ENCODE measurements at regions of chr5 and their contacts with region 1.

Region 1: GRCh38 chr5:59216841-59217240 is 634.0 kb downstream of the RAB3C start:
- DNase-seq: no peak
- ATAC-seq: no peak
- H3K4me3 Mint-ChIP-seq: no peak overlapping the region
- H3K27ac Mint-ChIP-seq: no peak overlapping the region
- H3K4me1 Mint-ChIP-seq: no peaks in the 10 kb centered on the region
- H3K27me3 Mint-ChIP-seq: peaks cover 30% of the 10 kb centered on the region

Region 2: DNA sequence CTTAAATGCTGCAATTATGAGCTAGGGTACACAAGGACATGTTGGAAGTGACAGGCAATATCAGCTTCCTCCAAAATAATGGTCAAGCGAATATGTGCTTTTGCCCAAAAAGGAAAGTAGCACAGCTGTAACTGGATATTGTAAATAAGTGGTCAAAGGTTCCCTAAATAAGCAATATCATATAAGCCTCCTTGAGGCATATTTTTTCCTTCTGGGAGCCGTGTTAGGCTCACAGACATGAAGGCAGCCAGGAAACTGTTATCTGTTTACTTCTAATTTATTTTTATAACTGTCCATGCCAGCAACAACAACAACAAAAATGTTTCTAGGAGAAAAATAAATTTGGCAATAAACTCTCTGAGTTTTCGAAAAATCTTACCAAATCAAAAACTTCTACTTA is 28.4 kb after region 1 on chr5:
- CTCF ChIA-PET with region 1: no interaction called
- POLR2A ChIA-PET with region 1: no interaction called
- DNase-seq: no peak
- ATAC-seq: no peak
- H3K4me3 Mint-ChIP-seq: no peak overlapping the region
- H3K27ac Mint-ChIP-seq: no peak overlapping the region
- H3K4me1 Mint-ChIP-seq: no peaks in the 10 kb centered on the region
- H3K27me3 Mint-ChIP-seq: peaks cover 6% of the 10 kb centered on the region

Region 3: GRCh38 chr5:59360130-59360555 is 143.3 kb after region 1 on chr5:
- CTCF ChIA-PET with region 1: no interaction called
- POLR2A ChIA-PET with region 1: no interaction called
- DNase-seq: no peak
- ATAC-seq: no peak
- H3K4me3 Mint-ChIP-seq: no peak overlapping the region
- H3K27ac Mint-ChIP-seq: no peak overlapping the region
- H3K4me1 Mint-ChIP-seq: no peaks in the 10 kb centered on the region
- H3K27me3 Mint-ChIP-seq: peaks cover 23% of the 10 kb centered on the region

Region 4: GRCh38 chr5:59380350-59380951 is 163.6 kb after region 1 on chr5:
- CTCF ChIA-PET with region 1: interaction called, 14 read pairs
- POLR2A ChIA-PET with region 1: no interaction called
- DNase-seq: peak; percentile 50
- ATAC-seq: peak; percentile 89
- H3K4me3 Mint-ChIP-seq: no peak overlapping the region
- H3K27ac Mint-ChIP-seq: no peak overlapping the region
- H3K4me1 Mint-ChIP-seq: peaks cover 5% of the 10 kb centered on the region
- H3K27me3 Mint-ChIP-seq: peaks cover 11% of the 10 kb centered on the region